Activated T-helper 2 cell treated with anti-CD3 and anti-CD28 coated beads, Interferon-gamma antibody, Interleukin-2, Interleukin-4, amounts not matched to agents 10 μg/mL and 5 μg/mL and 100 μg/mL, durations not matched to agents 14 hours and 24 hours and 36 hours (primary cell): ENCODE measurements at regions of chr3 and their contacts with region 1.

Region 1: GRCh38 chr3:143585720-143586456 is 262.4 kb downstream of the SLC9A9 start:
- DNase-seq: no peak
- H3K4me3 Mint-ChIP-seq: no peak overlapping the region
- H3K27ac Mint-ChIP-seq: no peak overlapping the region
- H3K4me1 Mint-ChIP-seq: peaks cover 19% of the 10 kb centered on the region
- H3K27me3 Mint-ChIP-seq: no peaks in the 10 kb centered on the region

Region 2: DNA sequence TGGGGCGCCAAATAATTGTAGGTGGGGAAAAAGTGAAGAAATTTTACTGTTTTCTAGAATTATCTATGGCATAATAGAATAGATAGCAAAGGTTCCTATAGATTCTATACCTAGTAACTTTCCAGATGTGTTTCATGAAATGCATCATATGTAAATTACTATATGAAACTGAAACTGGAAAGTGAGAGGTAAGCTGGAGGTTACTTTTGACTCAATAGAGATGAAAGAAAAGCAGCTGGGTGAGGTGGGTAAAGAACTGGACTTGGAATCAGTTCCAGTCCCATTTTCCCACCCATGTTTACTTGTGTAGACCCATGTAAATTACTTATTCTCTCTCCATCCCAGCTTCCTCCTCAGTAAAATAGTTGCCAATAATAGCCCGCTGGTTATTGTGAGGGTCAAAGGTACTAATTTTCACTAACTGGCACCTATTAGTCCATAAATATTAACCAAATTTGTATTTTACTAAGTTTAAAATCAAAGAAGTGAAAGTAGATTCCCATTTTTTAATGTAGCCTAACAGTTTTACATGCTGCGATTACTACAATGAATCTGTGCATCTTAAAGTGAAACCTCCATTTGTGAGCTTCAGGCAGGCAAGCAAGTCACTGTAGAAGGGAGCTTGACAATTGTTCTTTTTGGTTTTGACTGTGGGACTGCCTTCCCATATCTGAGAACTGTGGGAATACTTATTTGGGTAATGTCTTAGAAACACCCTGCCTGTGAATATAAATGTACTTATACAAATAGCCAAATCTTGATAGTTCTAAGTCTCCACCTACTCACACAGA is 49.7 kb before region 1 on chr3:
- intact Hi-C with region 1: loop called (anchors 1 kb)
- DNase-seq: no peak
- H3K4me3 Mint-ChIP-seq: no peak overlapping the region
- H3K27ac Mint-ChIP-seq: no peak overlapping the region
- H3K4me1 Mint-ChIP-seq: peaks cover 12% of the 10 kb centered on the region
- H3K27me3 Mint-ChIP-seq: peaks cover 14% of the 10 kb centered on the region

Region 3: DNA sequence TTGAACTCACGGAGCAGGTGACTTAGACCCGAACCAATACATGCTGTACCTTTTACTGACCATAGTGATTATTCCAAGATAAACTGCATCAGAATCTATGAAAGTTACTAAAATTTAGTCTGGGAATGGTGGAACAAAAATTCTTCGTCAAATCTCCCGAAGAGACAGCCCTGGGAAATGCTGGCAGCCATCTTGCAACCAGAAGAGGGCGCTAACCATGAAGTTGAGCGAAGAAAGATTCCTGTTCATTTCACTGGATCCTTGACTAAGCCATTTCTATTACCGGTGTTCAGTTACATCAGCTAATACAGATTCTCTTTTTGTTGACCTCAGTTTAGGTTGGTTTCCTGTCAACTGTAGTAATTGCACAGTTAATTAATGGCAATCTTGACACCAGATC is 62.8 kb after region 1 on chr3:
- intact Hi-C with region 1: no loop called
- DNase-seq: no peak
- H3K4me3 Mint-ChIP-seq: no peak overlapping the region
- H3K27ac Mint-ChIP-seq: no peak overlapping the region
- H3K4me1 Mint-ChIP-seq: no peaks in the 10 kb centered on the region
- H3K27me3 Mint-ChIP-seq: peaks cover 2% of the 10 kb centered on the region